ENCODE measurements at regions of chr6 and their contacts with region 1.

Region 1: GRCh38 chr6:20572940-20573339 is 38.7 kb downstream of the CDKAL1 start:
- DNase-seq: no peak
- H3K4me3 ChIP-seq: no peak overlapping the region
- H3K27ac ChIP-seq: no peak overlapping the region
- H3K4me1 ChIP-seq: no peaks in the 10 kb centered on the region
- H3K27me3 ChIP-seq: no peaks in the 10 kb centered on the region
- CTCF ChIP-seq: no peak

Region 2: DNA sequence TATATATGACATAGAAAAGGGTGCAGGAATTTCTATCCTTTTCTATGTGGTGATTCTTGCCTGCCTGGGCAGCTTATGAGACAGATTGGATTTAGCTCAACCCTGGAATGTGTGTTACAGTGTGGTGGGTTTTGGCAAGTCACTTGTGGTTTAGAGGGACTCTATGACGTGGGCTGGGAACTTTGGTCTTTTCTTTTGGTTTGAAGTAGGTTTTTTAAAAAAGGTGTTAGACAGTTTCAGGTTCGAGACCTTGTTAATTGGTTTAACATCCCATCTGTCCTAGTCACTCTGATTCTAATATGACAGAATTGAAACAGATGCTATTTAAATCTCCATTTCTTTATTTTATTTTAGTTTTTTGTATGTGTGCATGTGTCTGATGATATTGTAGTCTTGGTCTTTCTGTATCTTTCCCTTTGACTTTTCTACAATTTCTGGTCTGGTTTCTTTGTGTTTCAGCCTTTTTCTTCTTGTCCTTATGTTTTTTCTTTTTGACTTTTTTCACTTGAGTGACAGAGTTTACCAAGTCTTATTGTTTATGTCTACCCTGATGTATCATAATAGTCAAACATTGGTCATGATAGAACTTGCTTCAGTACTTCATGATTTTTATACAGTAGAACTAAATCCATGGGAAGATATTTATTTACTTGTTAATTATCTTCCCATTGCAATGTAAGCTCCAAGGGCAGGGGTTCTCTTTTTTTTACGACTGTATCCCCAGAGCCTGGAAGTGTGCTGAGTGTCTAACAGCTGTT is 135.6 kb after region 1 on chr6:
- intact Hi-C with region 1: loop called (anchors 10 kb)
- DNase-seq: no peak
- H3K4me3 ChIP-seq: no peak overlapping the region
- H3K27ac ChIP-seq: no peak overlapping the region
- H3K4me1 ChIP-seq: peaks cover 10% of the 10 kb centered on the region
- H3K27me3 ChIP-seq: no peaks in the 10 kb centered on the region
- CTCF ChIP-seq: no peak